GM10248 (cell line): ENCODE measurements at regions of chr3 and their contacts with region 1.

Region 1: DNA sequence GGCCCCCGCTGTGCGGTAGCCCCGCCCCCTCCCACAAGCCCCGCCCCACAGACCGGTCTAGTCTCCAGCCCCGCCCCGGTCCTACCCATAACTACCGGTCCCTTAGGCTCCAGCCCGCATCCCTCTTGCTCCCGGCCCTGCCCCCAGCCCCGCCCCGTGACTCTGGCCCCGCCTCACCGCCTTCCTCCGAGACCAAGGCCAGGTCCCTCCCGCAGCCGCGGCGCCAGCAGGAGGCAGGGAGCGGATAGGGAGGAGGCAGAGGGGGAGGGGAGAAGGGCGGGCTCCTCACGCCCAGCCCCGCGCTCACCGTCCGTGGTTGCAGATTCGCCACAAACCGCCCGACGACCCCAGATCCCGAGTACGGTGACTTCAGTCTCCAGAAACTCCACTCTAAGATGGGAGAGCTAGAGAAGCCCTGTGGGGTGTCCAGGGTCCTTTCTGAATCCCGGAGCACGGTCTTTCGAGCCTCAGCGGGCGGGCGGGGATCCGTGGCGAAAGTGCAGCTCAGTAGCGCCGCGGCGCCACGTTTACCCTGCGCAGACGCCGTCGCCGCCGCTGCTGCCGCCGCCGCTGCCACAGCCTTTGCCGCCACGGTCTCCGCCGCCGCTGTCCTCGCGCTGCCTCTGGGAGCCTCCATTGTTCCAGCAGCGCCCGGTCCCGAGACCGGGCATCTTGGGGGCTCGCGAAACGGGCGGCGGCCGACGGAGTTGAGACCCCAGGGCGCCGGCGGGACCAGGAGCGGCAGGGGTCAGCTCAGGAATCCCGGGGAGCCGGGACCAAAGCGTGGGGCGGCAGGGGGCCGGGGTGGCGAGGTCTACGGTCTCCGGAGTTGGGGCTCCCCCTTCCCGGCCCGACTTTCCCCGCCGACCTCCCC is at the start of gene BRPF1:
- DNase-seq: peak; percentile 100
- CTCF ChIP-seq: no peak

Region 2: DNA sequence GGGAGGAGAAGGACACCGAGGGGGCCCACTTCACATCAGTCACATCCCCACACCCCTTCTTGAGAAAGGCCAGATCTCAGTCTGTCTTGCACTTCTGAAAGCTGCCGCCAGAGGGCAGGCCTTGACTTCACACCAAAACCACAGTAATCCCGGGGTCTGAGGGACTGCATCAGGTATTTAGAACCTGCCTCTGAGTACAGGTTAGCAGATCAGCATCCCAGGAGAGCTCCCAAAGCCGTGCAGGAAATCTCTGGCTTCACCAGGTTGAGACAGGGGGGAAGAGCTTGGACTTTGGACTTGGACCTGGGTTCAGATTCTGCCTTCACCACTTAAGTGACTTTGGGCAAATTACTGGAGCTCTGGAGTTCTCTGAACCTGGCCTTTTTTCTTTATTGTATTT is 228.2 kb before region 1 on chr3:
- CTCF ChIA-PET with region 1: interaction called, 17 read pairs
- POLR2A ChIA-PET with region 1: no interaction called
- DNase-seq: peak; percentile 78
- CTCF ChIP-seq: peak; percentile 90

Region 3: GRCh38 chr3:9688961-9689360 is 42.5 kb before region 1 on chr3:
- CTCF ChIA-PET with region 1: interaction called, 10 read pairs
- POLR2A ChIA-PET with region 1: no interaction called
- DNase-seq: no peak
- CTCF ChIP-seq: no peak

Region 4: DNA sequence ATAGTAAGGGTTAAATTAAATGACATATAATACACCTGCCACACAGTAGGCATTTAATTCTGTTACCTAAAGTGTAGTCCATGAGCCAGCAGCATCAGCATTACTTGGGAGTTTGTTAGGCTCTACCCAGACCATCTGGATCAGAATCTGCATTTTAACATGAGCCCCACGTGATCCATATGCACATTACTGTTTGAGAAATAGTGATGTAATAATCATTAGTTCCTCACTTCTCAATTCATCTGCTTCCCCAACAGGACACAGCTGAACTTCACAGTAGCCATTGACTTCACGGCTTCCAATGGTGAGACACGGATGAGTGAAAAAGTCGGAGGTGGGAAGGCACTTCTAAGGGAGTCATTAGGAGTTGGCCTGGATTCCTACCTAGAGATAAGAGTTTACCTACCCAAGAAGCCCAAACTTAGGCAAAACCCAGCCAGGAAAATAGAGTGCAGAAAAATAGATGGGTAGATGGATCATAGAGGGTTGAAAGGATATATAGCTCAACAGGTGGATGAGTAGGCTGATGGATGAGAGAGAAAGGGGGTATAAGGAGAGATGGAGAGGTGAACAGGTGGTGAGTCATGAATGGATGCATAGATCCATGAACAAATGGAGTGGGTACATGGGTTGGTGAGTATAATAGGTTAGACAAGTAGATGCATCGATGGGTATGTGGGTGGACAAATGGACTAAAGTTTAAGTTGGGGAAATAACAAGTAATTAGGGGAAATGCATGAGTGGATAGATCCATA is 14.5 kb before region 1 on chr3:
- CTCF ChIA-PET with region 1: interaction called, 12 read pairs
- POLR2A ChIA-PET with region 1: no interaction called
- DNase-seq: no peak
- CTCF ChIP-seq: no peak

Region 5: GRCh38 chr3:9749645-9750555 is 18.5 kb after region 1 on chr3 and contains the start of gene OGG1:
- CTCF ChIA-PET with region 1: interaction called, 26 read pairs
- POLR2A ChIA-PET with region 1: interaction called, 11 read pairs
- DNase-seq: peak; percentile 98
- CTCF ChIP-seq: no peak